H1 (cell line): ENCODE measurements at regions of chr7 and their contacts with region 1.

Region 1: DNA sequence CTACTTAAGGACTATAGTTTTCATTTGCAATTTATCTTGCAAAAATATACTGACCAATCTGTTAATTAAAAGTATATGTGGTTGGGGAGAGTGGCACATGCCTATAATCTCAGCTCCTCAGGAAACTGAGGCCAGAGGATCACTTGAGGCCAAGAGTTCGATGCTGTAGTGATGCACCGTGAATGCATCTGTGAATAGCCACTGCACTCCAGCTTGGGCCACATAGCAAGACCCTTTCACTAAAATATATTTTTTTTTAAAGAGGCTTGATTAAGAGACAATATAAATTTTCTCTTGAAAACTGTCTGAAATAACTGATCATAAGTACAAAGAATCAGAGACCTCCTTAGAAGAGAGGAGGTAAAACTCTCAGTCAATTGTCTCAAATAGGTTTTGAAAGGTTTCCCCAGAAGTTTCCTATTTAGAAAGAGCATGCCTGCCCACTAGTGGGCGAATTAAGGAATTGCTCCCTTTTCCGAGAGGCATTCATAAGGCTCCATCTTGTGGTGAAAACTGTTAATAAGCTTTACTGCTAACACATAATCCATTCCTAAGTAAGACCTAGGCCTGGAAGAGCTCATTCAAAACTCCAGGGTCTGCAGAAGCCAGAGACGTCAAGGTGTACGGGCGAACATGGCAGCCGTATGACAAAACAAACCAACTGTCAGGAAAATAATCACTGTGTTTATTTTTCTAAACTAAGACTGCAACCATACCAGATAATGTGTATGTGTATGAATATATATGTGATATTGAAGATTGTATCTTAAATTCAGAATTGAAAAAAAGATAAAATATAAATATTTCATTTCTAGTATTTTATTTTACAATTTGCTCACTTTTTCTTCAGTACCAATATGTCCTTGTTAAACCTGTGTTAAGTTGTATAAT is 6.8 kb upstream of the TAS2R40 start:
- DNase-seq: peak; percentile 49 to 66
- H3K4me3 ChIP-seq: no peak overlapping the region
- H3K27ac ChIP-seq: no peak overlapping the region
- H3K4me1 ChIP-seq: no peaks in the 10 kb centered on the region
- H3K27me3 ChIP-seq: no peaks in the 10 kb centered on the region
- CTCF ChIP-seq: peak in 2 of 3 experiments; percentile 99 to 100; a peak in 3 of 4 replicates
- EP300 ChIP-seq: no peak
- POLR2A ChIP-seq: no peak
- RAD21 ChIP-seq: peak; percentile 100

Region 2: GRCh38 chr7:142866361-142867058 is 348.5 kb before region 1 on chr7:
- CTCF ChIA-PET with region 1: interaction called, 18 read pairs
- POLR2A ChIA-PET with region 1: no interaction called
- DNase-seq: peak in 1 of 2 experiments; percentile 82
- H3K4me3 ChIP-seq: no peak overlapping the region
- H3K27ac ChIP-seq: no peak overlapping the region
- H3K4me1 ChIP-seq: peaks cover 3 to 10% (median 9%) of the 10 kb centered on the region in 4 experiments; a peak in 6 of 7 replicates
- H3K27me3 ChIP-seq: no peaks in the 10 kb centered on the region
- CTCF ChIP-seq: peak; percentile 79 to 84 (median 83)
- EP300 ChIP-seq: no peak
- POLR2A ChIP-seq: no peak
- RAD21 ChIP-seq: peak; percentile 67 to 77

Region 3: DNA sequence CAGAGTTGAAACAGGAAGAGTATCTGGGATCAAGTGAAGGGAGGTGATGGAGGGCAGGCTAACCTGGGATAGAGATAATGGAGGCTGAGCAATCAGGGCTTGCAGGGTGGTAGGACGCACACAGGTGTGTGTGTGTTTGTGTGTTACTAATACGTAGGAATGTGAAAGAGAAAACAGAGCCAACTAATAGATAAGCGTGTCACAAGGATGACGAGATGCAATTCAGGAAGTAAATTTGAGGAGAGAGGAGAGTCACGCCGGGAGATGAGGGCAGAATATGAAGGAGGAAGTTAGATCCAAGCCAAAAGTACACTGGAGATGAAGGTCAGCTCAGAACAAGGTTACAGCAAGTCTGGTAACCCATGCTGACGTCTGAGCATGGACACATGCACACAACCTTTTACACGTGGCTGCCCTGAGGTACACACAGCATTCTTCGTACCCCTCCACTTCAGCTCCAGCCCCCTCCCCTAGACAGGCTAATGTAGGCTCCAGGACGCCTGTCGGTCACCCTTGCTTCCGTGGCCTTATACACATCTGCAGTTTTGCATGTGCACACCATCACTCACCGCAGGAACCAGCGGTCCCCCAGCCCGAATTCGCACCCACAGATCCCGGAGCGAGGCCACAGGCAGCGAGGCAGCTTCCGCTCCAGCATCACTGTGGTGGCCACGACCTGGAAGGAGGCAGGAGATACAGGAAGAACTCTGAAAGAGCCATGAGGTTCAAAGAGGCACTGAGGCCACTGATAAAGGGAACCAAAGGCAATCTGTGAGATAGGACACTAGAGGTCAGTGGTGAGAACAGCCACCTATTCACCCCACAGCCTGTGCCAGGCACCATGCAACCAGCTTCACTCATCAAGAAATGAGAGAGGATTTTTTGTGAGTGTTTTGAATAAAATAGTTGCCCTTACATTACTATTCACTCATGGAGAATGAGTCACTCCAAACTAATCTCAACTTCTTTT is 305.8 kb before region 1 on chr7:
- CTCF ChIA-PET with region 1: interaction called, 18 read pairs
- POLR2A ChIA-PET with region 1: no interaction called
- DNase-seq: no peak
- H3K4me3 ChIP-seq: no peak overlapping the region
- H3K27ac ChIP-seq: no peak overlapping the region
- H3K4me1 ChIP-seq: no peaks in the 10 kb centered on the region
- H3K27me3 ChIP-seq: no peaks in the 10 kb centered on the region
- CTCF ChIP-seq: peak; percentile 41 to 72 (median 53)
- EP300 ChIP-seq: no peak
- POLR2A ChIP-seq: no peak
- RAD21 ChIP-seq: peak; percentile 43 to 55

Region 4: GRCh38 chr7:143042159-143042789 is 172.8 kb before region 1 on chr7:
- CTCF ChIA-PET with region 1: interaction called, 24 read pairs
- POLR2A ChIA-PET with region 1: no interaction called
- DNase-seq: no peak
- H3K4me3 ChIP-seq: no peak overlapping the region
- H3K27ac ChIP-seq: 0 out of 2 replicates have a peak overlapping the region, but pooled peaks have one; percentile 5
- H3K4me1 ChIP-seq: no peaks in the 10 kb centered on the region
- H3K27me3 ChIP-seq: no peaks in the 10 kb centered on the region
- CTCF ChIP-seq: no peak
- EP300 ChIP-seq: no peak
- POLR2A ChIP-seq: no peak
- RAD21 ChIP-seq: no peak

Region 5: DNA sequence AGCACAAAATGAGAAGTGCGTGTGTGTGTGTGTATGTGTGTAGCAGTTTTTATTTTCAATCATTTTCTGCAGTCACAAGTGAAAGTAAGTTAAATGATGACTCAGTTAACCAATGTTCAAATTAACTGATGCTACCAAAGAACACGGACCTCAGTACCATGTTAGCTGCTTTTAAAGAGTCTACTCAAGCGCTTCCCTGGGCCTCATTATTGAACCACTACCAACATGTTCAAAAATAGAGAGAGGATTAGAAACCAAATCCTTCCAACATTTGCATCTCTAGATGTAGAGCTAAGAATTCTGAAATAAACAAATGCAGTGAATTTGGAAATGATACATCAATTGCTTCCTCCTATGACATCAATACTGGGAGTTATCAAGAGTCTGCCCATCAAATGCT is 32.0 kb before region 1 on chr7 and contains the start of gene TAS2R39:
- CTCF ChIA-PET with region 1: interaction called, 11 read pairs
- POLR2A ChIA-PET with region 1: no interaction called
- DNase-seq: no peak
- H3K4me3 ChIP-seq: no peak within 1 kb of the TSS
- H3K27ac ChIP-seq: no peak within 1 kb of the TSS
- H3K4me1 ChIP-seq: peaks cover 0 to 3% (median 1%) of the 10 kb centered on the region in 4 experiments; a peak in 1 of 7 replicates
- H3K27me3 ChIP-seq: no peaks in the 10 kb centered on the region
- CTCF ChIP-seq: no peak
- EP300 ChIP-seq: no peak
- POLR2A ChIP-seq: no peak
- RAD21 ChIP-seq: no peak
- total RNA-seq, gene TAS2R39: not detected in 2 replicates

Region 6: DNA sequence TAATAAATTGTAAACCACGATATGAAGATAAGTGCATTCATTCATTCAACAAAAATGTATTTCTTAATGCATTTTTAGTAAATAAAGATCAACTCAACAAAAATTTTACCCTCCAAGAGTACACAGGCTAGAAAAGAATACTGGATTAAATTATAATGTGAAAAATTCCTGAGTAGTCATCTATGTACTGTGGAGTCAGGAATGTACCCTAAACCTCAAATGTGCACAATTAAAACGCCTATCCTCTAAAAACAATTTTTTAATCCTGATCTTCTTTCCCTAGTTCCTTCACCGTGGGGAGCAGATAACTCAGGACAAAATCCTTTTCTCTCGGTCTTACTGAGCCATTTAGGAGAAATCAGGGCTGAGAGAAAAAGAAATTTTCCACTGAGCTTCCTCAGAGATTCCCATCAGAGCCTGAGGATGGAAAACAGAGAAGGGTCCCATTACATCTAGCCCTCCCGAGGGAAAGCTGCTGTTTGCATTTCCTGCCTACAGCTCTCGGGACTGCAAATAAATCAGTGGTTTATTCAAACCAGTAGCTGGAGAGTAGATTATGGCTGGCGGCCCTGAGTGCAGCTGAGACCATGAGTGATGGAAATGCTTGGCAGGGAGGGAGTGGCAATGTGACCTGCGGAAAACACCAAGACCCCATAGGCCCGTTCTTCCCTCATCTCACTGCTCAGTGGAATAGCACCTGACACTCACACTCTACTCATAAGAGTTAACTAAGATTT is 14.2 kb after region 1 on chr7:
- CTCF ChIA-PET with region 1: interaction called, 25 read pairs
- POLR2A ChIA-PET with region 1: no interaction called
- DNase-seq: no peak
- H3K4me3 ChIP-seq: no peak overlapping the region
- H3K27ac ChIP-seq: no peak overlapping the region
- H3K4me1 ChIP-seq: peaks cover 0 to 2% (median 0%) of the 10 kb centered on the region in 4 experiments; a peak in 1 of 7 replicates
- H3K27me3 ChIP-seq: no peaks in the 10 kb centered on the region
- CTCF ChIP-seq: no peak
- EP300 ChIP-seq: no peak
- POLR2A ChIP-seq: no peak
- RAD21 ChIP-seq: no peak

Region 7: DNA sequence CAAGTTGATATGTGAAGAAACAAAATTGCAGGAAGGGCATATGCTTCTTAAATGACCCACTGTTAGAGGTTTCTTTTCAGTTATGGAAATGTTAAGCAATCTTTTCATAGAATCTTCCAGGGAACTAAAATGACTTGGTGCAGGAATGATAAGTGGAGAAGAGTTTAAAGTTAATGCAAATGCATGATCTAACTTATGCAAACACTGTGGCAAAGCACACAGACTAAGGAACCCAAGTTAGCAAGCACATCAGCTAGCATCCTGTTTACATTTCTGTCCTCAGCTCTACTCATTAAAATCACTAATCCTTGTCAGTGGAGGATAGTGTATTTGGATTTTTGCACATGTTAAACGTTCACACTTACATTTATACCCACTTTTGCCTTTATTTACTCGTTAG is 110.2 kb after region 1 on chr7:
- CTCF ChIA-PET with region 1: no interaction called
- POLR2A ChIA-PET with region 1: no interaction called
- DNase-seq: no peak
- H3K4me3 ChIP-seq: no peak overlapping the region
- H3K27ac ChIP-seq: no peak overlapping the region
- H3K4me1 ChIP-seq: peaks cover 0 to 5% (median 0%) of the 10 kb centered on the region in 4 experiments; a peak in 1 of 7 replicates
- H3K27me3 ChIP-seq: no peaks in the 10 kb centered on the region
- CTCF ChIP-seq: no peak
- EP300 ChIP-seq: no peak
- POLR2A ChIP-seq: no peak
- RAD21 ChIP-seq: no peak

Region 8: DNA sequence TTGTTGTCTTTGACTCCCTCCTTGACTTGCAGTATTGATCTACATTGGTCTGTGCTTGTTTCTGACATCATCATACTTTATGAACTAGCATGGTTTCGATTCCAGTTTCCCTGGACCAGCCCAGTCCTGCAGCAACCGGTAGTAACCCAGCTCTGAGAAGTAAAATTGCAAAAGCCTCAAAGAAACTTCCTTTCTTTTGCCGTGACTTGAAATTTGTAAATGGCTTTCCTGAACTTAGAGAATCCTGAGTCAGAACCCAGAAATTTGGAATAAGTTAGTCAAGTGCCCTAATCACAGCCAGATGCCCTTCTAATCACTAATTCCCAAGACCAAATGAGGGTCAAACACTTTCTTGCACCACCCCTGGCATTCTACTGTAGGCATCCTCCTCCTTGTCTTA is 243.2 kb after region 1 on chr7:
- CTCF ChIA-PET with region 1: no interaction called
- POLR2A ChIA-PET with region 1: no interaction called
- DNase-seq: no peak
- H3K4me3 ChIP-seq: no peak overlapping the region
- H3K27ac ChIP-seq: no peak overlapping the region
- H3K4me1 ChIP-seq: peaks cover 0 to 2% (median 0%) of the 10 kb centered on the region in 4 experiments; a peak in 1 of 7 replicates
- H3K27me3 ChIP-seq: no peaks in the 10 kb centered on the region
- CTCF ChIP-seq: no peak
- EP300 ChIP-seq: no peak
- POLR2A ChIP-seq: no peak
- RAD21 ChIP-seq: no peak